CD4-positive, alpha-beta T cell (primary cell): ENCODE measurements at regions of chr15 and their contacts with region 1.

Region 1: DNA sequence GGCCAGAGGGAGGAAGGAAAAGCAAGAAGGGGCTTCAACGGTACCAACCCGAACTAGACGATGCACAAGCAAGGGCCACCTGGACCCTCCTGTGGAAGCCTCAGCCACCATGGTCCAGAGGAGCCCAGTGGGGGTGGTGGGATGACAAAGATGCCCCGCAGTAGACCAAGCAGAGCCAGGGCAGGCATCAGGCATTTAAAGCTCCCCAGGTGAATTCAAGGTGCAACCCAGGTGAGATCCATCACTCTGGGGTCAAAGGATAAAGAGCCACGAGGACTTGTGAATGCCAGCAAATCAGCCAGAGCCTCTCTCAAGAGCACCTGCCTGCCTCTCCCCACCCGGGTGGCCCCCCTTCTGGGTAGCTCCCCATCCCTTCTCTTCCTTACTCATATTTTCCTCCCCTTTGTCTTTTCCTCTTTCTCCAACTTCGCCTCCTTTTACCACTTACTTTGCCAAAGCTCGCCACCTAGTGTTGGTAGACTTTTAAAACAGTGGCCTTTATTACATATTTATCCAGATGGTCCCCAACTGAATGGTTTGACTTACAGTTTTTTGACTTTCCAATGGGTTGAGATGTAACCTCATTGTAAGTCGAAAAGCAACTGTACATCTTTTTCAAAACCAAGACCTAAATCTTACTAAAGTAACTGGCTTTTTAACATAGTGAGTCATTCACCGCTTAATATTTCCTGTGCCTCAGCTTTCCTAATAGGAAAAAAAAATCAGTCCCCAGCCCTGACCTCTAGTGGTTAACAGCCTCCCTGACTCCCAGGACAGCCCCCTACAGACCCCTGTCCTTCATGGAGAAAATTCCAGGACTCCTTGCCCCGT is 18.8 kb downstream of the PLA2G4F start:
- DNase-seq: peak in 5 of 14 experiments; percentile 13 to 51 (median 36)
- ATAC-seq: no peak
- H3K4me3 ChIP-seq: no peak overlapping the region
- H3K4me3 Mint-ChIP-seq: no peak overlapping the region
- H3K27ac ChIP-seq: no peak overlapping the region
- H3K27ac Mint-ChIP-seq: no peak overlapping the region
- H3K4me1 ChIP-seq: no peaks in the 10 kb centered on the region
- H3K4me1 Mint-ChIP-seq: no peaks in the 10 kb centered on the region
- H3K27me3 ChIP-seq: no peaks in the 10 kb centered on the region
- H3K27me3 Mint-ChIP-seq: no peaks in the 10 kb centered on the region
- CTCF ChIP-seq: peak; percentile 68

Region 2: DNA sequence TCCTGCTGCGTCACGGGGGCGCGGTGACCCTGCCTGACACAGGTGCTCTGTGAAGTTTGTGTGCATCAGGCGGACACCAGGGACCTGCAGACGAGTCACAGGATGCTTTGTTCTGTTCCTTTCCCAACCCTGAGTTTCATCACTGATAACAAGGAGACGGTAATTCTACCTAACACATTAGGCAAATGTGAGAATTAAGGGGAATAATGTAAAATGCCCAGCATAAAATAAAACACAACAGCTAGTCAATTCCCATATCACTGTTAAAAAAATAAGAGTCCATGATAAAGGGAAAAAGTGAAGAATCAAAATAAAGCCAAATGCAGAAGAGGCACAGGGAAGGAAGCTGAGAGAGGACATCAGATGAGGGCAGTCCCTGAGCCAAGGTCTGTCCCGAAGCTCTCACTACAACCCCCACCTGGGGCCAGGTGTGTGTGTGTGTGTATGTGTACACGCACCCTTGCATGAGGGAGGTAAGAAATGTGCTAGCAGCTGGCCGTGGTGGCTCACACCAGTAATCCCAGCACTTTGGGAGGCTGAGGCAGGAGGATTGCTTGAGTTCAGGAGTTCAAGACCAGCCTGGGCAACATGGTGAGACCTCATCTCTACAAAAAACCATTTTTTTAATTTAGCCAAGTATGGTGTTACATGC is 70.8 kb before region 1 on chr15:
- CTCF ChIA-PET with region 1: no interaction called
- POLR2A ChIA-PET with region 1: no interaction called
- intact Hi-C with region 1: loop called in 1 of 2 experiments (anchors 2 kb)
- DNase-seq: no peak
- ATAC-seq: no peak
- H3K4me3 ChIP-seq: no peak overlapping the region
- H3K4me3 Mint-ChIP-seq: no peak overlapping the region
- H3K27ac ChIP-seq: no peak overlapping the region
- H3K27ac Mint-ChIP-seq: no peak overlapping the region
- H3K4me1 ChIP-seq: no peaks in the 10 kb centered on the region
- H3K4me1 Mint-ChIP-seq: no peaks in the 10 kb centered on the region
- H3K27me3 ChIP-seq: no peaks in the 10 kb centered on the region
- H3K27me3 Mint-ChIP-seq: peaks cover 27% of the 10 kb centered on the region
- CTCF ChIP-seq: no peak